Adrenal gland (tissue), 19 donors: ENCODE measurements at regions of chr11 and their contacts with region 1.

Region 1: DNA sequence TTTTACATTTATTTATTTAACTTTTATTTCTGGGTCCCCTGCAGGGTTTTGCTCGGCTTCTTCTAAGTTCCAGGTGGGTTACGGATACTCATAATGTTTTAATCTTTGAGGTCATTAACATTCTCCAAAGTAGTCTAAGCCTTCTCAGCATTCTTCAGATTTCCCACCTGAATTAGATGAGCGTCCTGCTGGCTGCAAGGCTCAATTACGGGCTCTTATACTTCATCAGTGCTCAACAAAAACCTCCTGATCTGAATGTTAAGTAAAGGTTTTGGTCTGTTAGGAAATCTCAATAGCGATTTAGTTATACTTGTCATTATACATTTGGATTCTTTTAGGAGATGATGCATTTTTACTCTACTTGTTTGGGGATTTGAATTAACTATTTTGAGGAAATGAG is 27.3 kb upstream of the NFRKB start:
- DNase-seq: no peak
- H3K4me3 ChIP-seq: no peak overlapping the region
- H3K27ac ChIP-seq: no peak overlapping the region
- H3K4me1 ChIP-seq: no peaks in the 10 kb centered on the region
- H3K27me3 ChIP-seq: no peaks in the 10 kb centered on the region
- CTCF ChIP-seq: no peak
- POLR2A ChIP-seq: no peak

Region 2: DNA sequence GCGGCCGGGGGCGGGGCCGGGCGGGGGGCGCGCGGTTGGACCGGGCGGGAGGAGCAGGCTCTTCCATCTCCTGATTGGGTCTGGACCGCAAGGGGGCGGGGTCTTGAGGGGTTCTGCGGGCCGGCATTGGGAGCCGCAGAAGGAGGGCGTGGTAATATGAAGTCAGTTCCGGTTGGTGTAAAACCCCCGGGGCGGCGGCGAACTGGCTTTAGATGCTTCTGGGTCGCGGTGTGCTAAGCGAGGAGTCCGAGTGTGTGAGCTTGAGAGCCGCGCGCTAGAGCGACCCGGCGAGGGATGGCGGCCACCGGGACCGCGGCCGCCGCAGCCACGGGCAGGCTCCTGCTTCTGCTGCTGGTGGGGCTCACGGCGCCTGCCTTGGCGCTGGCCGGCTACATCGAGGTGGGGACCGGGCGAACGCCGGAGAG is 147.0 kb after region 1 on chr11 and contains the start of gene APLP2:
- intact Hi-C with region 1: no loop called
- DNase-seq: peak; percentile 99 to 100 (median 99)
- H3K4me3 ChIP-seq: peak within 1 kb of the TSS; percentile 64 to 98 (median 70)
- H3K27ac ChIP-seq: peak within 1 kb of the TSS; percentile 79 to 96 (median 95)
- H3K4me1 ChIP-seq: peaks cover 7 to 16% of the 10 kb centered on the region in 2 donors
- H3K27me3 ChIP-seq: no peaks in the 10 kb centered on the region
- CTCF ChIP-seq: no peak
- POLR2A ChIP-seq: peak; percentile 93 to 95
- total RNA-seq, gene APLP2: 210 to 374 (median 296) TPM

Region 3: GRCh38 chr11:130131961-130132850 is 209.5 kb after region 1 on chr11:
- intact Hi-C with region 1: loop called (anchors 5 kb)
- DNase-seq: peak; percentile 42 to 77 (median 54)
- H3K4me3 ChIP-seq: no peak overlapping the region
- H3K27ac ChIP-seq: no peak overlapping the region
- H3K4me1 ChIP-seq: no peaks in the 10 kb centered on the region
- H3K27me3 ChIP-seq: no peaks in the 10 kb centered on the region
- CTCF ChIP-seq: peak; percentile 69 to 95 (median 84)
- POLR2A ChIP-seq: no peak